ENCODE measurements at regions of chr4 and their contacts with region 1.

Region 1: DNA sequence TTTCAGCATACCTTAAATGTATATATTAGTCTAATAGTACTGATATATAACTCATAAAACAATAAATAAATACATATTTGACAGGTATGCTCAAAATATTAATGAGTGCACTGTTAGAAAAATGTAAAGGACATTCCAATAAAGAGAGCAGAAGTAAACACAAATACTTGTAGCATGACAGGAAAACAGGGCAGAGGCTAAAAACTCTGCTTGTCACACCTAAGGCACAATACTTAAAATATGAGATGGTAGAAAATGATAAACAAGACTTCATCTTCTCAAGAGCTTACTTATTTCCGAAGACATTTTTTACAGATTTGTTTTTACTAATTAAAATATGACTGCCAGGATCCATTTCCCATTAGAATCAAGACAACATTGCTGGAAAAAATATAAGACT is 304.7 kb upstream of the GK2 start:
- DNase-seq: no peak
- H3K4me3 ChIP-seq: no peak overlapping the region
- CTCF ChIP-seq: no peak
- POLR2A ChIP-seq: no peak

Region 2: GRCh38 chr4:80471756-80472155 is 759.0 kb after region 1 on chr4:
- intact Hi-C with region 1: loop called (anchors 10 kb)
- DNase-seq: no peak
- H3K4me3 ChIP-seq: no peak overlapping the region
- CTCF ChIP-seq: no peak
- POLR2A ChIP-seq: no peak

Measured in lower leg skin (tissue), 4 donors.